Ascending aorta (tissue), 2 donors: ENCODE measurements at regions of chr5 and their contacts with region 1.

Region 1: GRCh38 chr5:141040771-141041426 is 10.3 kb upstream of the PCDHB1 start:
- DNase-seq: peak; percentile 37 to 92
- H3K4me3 ChIP-seq: peak overlapping the region; percentile 41 to 42
- H3K27ac ChIP-seq: no peak overlapping the region
- H3K4me1 ChIP-seq: no peaks in the 10 kb centered on the region
- H3K27me3 ChIP-seq: no peaks in the 10 kb centered on the region
- CTCF ChIP-seq: peak; percentile 60 to 72 (median 65)

Region 2: DNA sequence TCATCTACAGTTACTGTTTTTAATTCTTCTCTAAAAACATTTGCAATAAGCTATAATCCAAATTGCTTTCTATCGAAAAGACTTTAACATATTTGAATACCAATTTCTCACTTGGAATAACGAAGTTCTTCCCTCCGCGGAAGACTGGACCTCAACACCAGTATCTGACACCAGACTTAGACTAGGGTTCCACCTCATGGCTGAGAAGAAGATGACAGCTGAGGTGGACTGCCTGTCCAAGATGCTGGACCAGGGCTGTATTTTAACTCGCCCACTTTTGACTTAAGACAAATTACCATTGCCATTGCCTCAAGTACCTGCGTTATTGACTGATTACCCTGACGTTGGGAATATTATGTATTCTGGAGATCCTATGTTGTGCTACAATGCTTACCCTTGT is 306.5 kb before region 1 on chr5:
- intact Hi-C with region 1: no loop called
- DNase-seq: no peak
- H3K4me3 ChIP-seq: no peak overlapping the region
- H3K27ac ChIP-seq: no peak overlapping the region
- H3K4me1 ChIP-seq: no peaks in the 10 kb centered on the region
- H3K27me3 ChIP-seq: no peaks in the 10 kb centered on the region
- CTCF ChIP-seq: peak in 2 of 3 experiments; percentile 35 to 44

Region 3: DNA sequence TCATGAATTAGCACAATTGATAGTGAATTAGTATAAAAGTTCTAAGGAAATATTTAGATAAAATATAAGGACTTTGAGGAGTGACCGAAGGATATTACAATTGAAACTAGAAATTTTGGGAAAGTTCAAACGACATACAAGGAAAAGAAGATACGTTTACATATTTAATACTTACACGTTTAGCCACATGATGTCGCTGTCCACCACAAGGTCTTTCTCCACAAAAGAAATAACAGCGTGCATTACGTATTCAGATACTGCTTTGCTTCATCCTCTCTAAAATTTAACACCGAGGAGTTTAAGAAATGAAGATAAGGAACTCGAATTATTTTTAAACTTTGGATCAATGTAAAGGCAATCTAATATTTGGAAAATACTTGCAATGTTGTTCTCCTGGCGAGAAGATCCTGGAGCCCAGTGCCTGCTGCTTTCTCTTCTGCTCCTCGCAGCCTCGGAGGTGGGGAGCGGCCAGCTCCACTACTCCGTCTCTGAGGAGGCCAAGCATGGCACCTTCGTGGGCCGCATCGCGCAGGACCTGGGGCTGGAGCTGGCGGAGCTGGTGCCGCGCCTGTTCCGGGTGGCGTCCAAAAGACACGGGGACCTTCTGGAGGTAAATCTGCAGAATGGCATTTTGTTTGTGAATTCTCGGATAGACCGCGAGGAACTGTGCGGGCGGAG is 239.9 kb before region 1 on chr5 and contains the start of gene PCDHA3:
- intact Hi-C with region 1: loop called (anchors 1 kb)
- DNase-seq: no peak
- H3K4me3 ChIP-seq: peak within 1 kb of the TSS; percentile 15 to 41
- H3K27ac ChIP-seq: no peak within 1 kb of the TSS
- H3K4me1 ChIP-seq: no peaks in the 10 kb centered on the region
- H3K27me3 ChIP-seq: no peaks in the 10 kb centered on the region
- CTCF ChIP-seq: peak in 2 of 3 experiments; percentile 17 to 37
- total RNA-seq, gene PCDHA3: not detected

Region 4: GRCh38 chr5:140806834-140807775 is 233.8 kb before region 1 on chr5 and contains the start of gene PCDHA4:
- intact Hi-C with region 1: loop called (anchors 2 kb)
- DNase-seq: peak in 1 of 2 donors; percentile 62
- H3K4me3 ChIP-seq: peak within 1 kb of the TSS; percentile 16 to 60
- H3K27ac ChIP-seq: no peak within 1 kb of the TSS
- H3K4me1 ChIP-seq: no peaks in the 10 kb centered on the region
- H3K27me3 ChIP-seq: no peaks in the 10 kb centered on the region
- CTCF ChIP-seq: peak in 2 of 3 experiments; percentile 11 to 38
- total RNA-seq, gene PCDHA4: not detected

Region 5: DNA sequence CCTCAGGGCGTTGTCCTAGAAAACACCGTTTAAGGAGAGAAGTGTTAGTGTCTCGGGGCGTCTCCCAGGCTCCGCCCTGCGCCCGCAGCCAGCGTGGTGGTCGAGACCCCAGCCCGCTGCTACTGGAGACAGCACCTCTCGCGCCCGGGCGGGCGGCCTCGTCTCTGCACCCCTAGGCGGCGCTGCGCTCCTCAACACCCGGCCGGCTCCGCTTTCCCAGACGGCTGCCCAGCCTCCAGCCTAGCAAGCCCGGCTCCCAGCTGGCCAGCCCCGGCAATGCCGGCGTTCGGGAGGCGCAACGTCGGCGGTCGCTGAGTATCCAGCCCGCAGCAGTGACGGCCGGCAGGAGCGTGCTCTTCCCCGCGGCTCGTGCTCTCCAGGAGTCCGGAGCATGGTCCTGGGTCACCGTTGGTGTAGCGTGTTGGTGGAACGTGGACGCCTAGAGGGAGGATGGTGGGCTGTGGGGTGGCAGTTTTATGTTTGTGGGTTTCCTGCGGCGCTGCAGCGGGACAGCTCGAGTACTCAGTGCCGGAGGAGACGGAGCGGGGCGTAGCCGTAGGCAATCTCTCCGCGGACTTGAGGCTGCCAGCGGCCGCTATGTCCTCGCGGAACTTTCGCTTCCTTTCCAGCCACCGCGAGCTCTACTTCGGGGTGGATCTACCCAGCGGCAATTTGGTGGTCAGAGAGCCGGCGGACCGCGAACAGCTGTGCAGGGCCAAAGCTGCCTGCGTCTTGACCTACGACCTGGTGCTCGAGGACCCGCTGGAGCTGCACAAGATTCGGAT is 114.3 kb before region 1 on chr5:
- intact Hi-C with region 1: loop called (anchors 1 kb)
- DNase-seq: peak in 1 of 2 donors; percentile 78
- H3K4me3 ChIP-seq: peak overlapping the region; percentile 55 to 67
- H3K27ac ChIP-seq: no peak overlapping the region
- H3K4me1 ChIP-seq: peaks cover 0 to 6% of the 10 kb centered on the region in 2 donors
- H3K27me3 ChIP-seq: no peaks in the 10 kb centered on the region
- CTCF ChIP-seq: peak; percentile 27 to 74 (median 59)